AG04450 (cell line): ENCODE measurements at regions of chr13 and their contacts with region 1.

Region 1: GRCh38 chr13:71879129-71879535 is 12.1 kb upstream of the DACH1 start:
- DNase-seq: no peak
- H3K4me3 ChIP-seq: no peak overlapping the region
- H3K27ac ChIP-seq: no peak overlapping the region
- H3K27me3 ChIP-seq: no peaks in the 10 kb centered on the region
- CTCF ChIP-seq: peak; percentile 67

Region 2: GRCh38 chr13:70960841-70961443 is 918.2 kb before region 1 on chr13:
- CTCF ChIA-PET with region 1: interaction called, 12 read pairs
- POLR2A ChIA-PET with region 1: no interaction called
- DNase-seq: no peak
- H3K4me3 ChIP-seq: no peak overlapping the region
- H3K27ac ChIP-seq: no peak overlapping the region
- H3K27me3 ChIP-seq: no peaks in the 10 kb centered on the region
- CTCF ChIP-seq: peak; percentile 67

Region 3: DNA sequence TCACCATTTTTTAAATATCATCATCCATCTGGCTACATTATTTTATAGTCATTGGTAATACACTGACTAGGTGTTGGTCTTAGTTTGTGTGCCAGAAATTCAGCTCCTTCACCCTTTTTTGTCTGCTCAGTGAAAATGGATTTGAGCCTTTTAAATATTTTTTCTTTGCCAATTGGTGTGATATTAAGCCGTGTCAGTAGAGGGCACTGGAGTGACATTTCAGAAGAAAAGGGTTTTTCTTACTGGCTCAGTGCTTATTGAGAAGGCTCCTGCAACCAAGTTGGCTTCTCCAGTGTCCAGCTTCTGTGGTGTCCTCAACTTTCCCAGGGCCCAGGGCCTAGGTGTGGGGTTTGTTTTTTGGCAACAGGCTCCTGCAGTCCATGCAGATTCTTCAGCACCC is 558.7 kb before region 1 on chr13:
- CTCF ChIA-PET with region 1: interaction called, 24 read pairs
- POLR2A ChIA-PET with region 1: no interaction called
- DNase-seq: peak; percentile 7
- H3K4me3 ChIP-seq: no peak overlapping the region
- H3K27ac ChIP-seq: no peak overlapping the region
- H3K27me3 ChIP-seq: no peaks in the 10 kb centered on the region
- CTCF ChIP-seq: peak; percentile 65

Region 4: DNA sequence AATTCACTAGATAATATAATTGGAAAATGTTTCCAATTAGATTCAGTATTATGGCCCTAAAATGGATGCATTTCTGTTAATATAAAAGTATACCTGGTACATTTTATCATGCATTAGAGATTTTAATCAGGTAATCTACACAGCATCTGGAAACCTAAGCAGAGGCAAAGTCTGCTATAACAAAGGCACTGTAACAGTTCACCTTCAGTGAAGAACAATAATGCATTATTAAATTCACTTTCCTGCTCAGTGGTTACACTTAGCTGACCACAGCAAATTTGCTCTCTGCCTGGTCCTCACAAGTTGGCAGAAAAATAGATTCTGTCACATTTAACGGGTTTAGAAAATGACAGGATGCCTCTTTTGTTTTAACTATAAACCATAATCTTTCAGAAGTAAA is 339.0 kb before region 1 on chr13:
- CTCF ChIA-PET with region 1: no interaction called
- POLR2A ChIA-PET with region 1: no interaction called
- DNase-seq: no peak
- H3K4me3 ChIP-seq: no peak overlapping the region
- H3K27ac ChIP-seq: no peak overlapping the region
- H3K27me3 ChIP-seq: no peaks in the 10 kb centered on the region
- CTCF ChIP-seq: no peak

Region 5: GRCh38 chr13:71577127-71577526 is 302.0 kb before region 1 on chr13:
- CTCF ChIA-PET with region 1: no interaction called
- POLR2A ChIA-PET with region 1: no interaction called
- DNase-seq: no peak
- H3K4me3 ChIP-seq: no peak overlapping the region
- H3K27ac ChIP-seq: no peak overlapping the region
- H3K27me3 ChIP-seq: no peaks in the 10 kb centered on the region
- CTCF ChIP-seq: no peak

Region 6: DNA sequence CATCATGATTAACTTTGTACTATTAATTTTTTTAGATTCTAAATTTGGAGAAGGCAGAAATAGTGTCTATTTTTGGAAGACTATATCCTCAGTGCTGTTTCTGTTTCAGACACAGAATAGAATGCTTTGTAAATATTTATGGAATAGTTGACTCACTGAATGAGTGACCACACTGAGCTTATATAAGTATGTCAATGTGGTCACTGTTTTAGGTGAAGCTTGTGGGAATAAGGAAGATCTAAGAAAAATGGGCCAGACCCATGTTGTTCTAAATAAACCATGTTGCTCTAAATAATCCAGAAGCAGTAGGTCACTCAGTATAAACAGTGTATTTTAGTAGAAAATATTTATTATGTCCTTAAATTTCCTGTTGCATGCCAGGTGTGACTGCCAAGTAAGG is 33.4 kb after region 1 on chr13:
- CTCF ChIA-PET with region 1: no interaction called
- POLR2A ChIA-PET with region 1: no interaction called
- DNase-seq: no peak
- H3K4me3 ChIP-seq: no peak overlapping the region
- H3K27ac ChIP-seq: no peak overlapping the region
- H3K27me3 ChIP-seq: no peaks in the 10 kb centered on the region
- CTCF ChIP-seq: no peak